Gastrocnemius medialis (tissue), 4 donors: ENCODE measurements at regions of chr1 and their contacts with region 1.

Region 1: GRCh38 chr1:43414634-43415223 is 25.0 kb downstream of the SZT2 start:
- DNase-seq: peak in 1 of 2 donors; percentile 34
- ATAC-seq: peak; percentile 56 to 83
- H3K4me3 ChIP-seq: no peak overlapping the region
- H3K27ac ChIP-seq: no peak overlapping the region
- H3K4me1 ChIP-seq: no peaks in the 10 kb centered on the region
- H3K27me3 ChIP-seq: no peaks in the 10 kb centered on the region
- CTCF ChIP-seq: peak; percentile 18 to 69 (median 65)
- POLR2A ChIP-seq: no peak

Region 2: DNA sequence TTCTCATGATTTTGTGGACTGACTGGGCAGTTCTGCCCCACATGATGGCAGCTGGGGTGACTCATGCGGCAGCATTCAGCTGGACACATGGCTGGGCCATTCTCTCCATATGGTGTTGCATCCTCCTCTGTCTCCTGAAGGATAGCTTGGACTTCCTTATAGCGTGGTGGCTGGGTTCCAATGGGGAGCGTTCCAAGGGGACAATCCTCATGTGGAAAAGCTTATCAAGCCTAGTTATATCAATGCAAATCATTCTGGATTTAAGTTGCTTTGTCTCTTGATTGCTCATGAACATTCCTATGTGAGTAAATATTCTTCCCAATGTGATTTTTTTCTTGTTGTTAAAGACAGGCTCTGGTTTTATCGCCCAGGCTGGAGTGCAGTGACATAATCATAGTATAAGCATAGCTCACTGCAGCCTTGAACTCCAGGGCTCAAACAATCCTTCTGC is 442.9 kb before region 1 on chr1:
- in situ Hi-C with region 1: no loop called
- intact Hi-C with region 1: no loop called
- DNase-seq: no peak
- ATAC-seq: no peak
- H3K4me3 ChIP-seq: no peak overlapping the region
- H3K27ac ChIP-seq: no peak overlapping the region
- H3K4me1 ChIP-seq: no peaks in the 10 kb centered on the region
- H3K27me3 ChIP-seq: peaks cover 0 to 3% (median 0%) of the 10 kb centered on the region in 3 donors
- CTCF ChIP-seq: no peak
- POLR2A ChIP-seq: no peak

Region 3: GRCh38 chr1:43227143-43227764 is 187.5 kb before region 1 on chr1:
- in situ Hi-C with region 1: loop called (anchors 5 to 10 kb)
- intact Hi-C with region 1: loop called (anchors 1 kb)
- DNase-seq: peak; percentile 50 to 51
- ATAC-seq: peak; percentile 67 to 85
- H3K4me3 ChIP-seq: no peak overlapping the region
- H3K27ac ChIP-seq: no peak overlapping the region
- H3K4me1 ChIP-seq: no peaks in the 10 kb centered on the region
- H3K27me3 ChIP-seq: no peaks in the 10 kb centered on the region
- CTCF ChIP-seq: peak; percentile 81 to 93 (median 91)
- POLR2A ChIP-seq: no peak

Region 4: DNA sequence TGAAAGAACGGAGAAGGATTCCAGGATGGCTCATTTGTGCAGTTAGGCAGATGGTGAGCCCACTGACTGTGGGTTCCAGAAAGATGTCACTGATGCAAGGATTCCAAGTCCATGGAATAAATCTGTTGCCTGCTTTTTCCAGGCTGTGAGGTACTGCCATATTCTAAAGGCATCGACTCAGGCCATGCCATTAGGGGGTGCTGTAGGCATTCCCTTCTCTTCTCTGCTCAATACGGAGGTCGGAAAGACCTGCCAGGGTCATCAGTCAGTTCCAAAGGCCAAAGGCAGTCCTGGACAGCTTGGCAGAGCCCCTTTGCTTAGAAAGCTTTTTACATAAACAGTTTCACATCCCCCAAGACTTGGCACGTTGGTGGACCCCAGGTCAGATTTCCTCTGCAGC is 176.6 kb before region 1 on chr1:
- in situ Hi-C with region 1: loop called in 1 of 4 experiments (anchors 10 kb)
- intact Hi-C with region 1: no loop called
- DNase-seq: peak in 1 of 2 donors; percentile 44
- ATAC-seq: peak; percentile 66 to 80
- H3K4me3 ChIP-seq: no peak overlapping the region
- H3K27ac ChIP-seq: peak overlapping the region in 1 of 4 donors; percentile 18
- H3K4me1 ChIP-seq: no peaks in the 10 kb centered on the region
- H3K27me3 ChIP-seq: no peaks in the 10 kb centered on the region
- CTCF ChIP-seq: peak in 4 of 5 experiments; percentile 31 to 55 (median 53)
- POLR2A ChIP-seq: no peak

Region 5: GRCh38 chr1:43868741-43869067 is 454.0 kb after region 1 on chr1:
- in situ Hi-C with region 1: no loop called
- intact Hi-C with region 1: no loop called
- DNase-seq: peak in 1 of 2 donors; percentile 17
- ATAC-seq: peak; percentile 25 to 40
- H3K4me3 ChIP-seq: no peak overlapping the region
- H3K27ac ChIP-seq: peak overlapping the region; percentile 51 to 73 (median 60)
- H3K4me1 ChIP-seq: peaks cover 64 to 69% of the 10 kb centered on the region in 2 donors
- H3K27me3 ChIP-seq: no peaks in the 10 kb centered on the region
- CTCF ChIP-seq: no peak
- POLR2A ChIP-seq: no peak